Activated CD4-positive, alpha-beta memory T cell treated with anti-CD3 and anti-CD28 coated beads for 36 hours (primary cell): ENCODE measurements at regions of chr3 and their contacts with region 1.

Region 1: DNA sequence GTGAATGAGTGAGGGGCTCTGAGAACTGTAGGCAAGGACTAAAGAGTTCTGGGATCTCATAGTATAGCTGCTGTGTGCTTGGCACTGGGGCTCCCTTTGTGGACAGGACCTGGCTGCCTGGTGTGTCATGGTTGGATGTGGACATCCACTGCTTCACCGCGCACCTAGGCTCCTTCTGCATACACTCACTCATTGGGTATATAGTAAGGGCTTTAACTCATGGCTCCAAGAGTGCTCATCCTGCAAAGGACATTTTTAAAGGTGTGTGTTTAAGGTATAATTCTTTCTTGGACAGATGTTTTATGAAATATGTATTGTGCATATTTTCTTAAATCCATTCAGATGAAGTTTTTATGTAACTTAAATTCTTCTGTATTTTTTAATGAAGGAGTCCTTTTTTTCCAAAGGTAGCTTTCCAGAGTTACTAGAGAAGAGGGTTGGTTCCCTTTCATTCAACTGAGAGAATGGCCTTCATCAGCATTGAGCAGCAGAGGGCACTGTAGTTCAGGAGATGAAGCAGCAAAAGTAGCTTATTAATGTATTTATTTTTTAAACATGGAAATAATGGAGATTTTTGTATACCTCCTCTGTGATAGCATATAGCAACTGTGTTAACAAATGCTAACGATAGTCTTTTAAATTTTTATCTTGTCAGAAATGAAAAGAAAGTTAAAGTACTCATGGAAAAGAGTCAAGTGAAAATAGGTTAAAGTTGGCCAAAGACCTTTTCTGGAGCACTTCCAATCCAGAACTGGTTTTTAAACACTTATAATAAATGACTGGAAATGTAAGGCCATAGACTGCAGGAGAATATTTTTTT is 25.2 kb downstream of the OXNAD1 start:
- DNase-seq: peak; percentile 70
- H3K4me3 Mint-ChIP-seq: peak overlapping the region; percentile 45
- H3K27ac Mint-ChIP-seq: peak overlapping the region; percentile 85
- H3K4me1 Mint-ChIP-seq: peaks cover 89% of the 10 kb centered on the region
- H3K27me3 Mint-ChIP-seq: no peaks in the 10 kb centered on the region

Region 2: GRCh38 chr3:15815696-15816095 is 474.5 kb before region 1 on chr3:
- CTCF ChIA-PET with region 1: no interaction called
- POLR2A ChIA-PET with region 1: no interaction called
- intact Hi-C with region 1: no loop called
- DNase-seq: no peak
- H3K4me3 Mint-ChIP-seq: no peak overlapping the region
- H3K27ac Mint-ChIP-seq: no peak overlapping the region
- H3K4me1 Mint-ChIP-seq: peaks cover 48% of the 10 kb centered on the region
- H3K27me3 Mint-ChIP-seq: no peaks in the 10 kb centered on the region

Region 3: GRCh38 chr3:16264708-16265454 is 25.3 kb before region 1 on chr3 and contains the starts of genes DPH3 and OXNAD1:
- CTCF ChIA-PET with region 1: interaction called, 33 read pairs
- POLR2A ChIA-PET with region 1: interaction called, 15 read pairs
- intact Hi-C with region 1: loop called (anchors 1 kb)
- DNase-seq: peak; percentile 99
- H3K4me3 Mint-ChIP-seq: peak within 1 kb of the TSS; percentile 93
- H3K27ac Mint-ChIP-seq: peak within 1 kb of the TSS; percentile 94
- H3K4me1 Mint-ChIP-seq: peaks cover 36% of the 10 kb centered on the region
- H3K27me3 Mint-ChIP-seq: no peaks in the 10 kb centered on the region
- total RNA-seq, gene DPH3: 23.4 TPM
- total RNA-seq, gene OXNAD1: 23.5 to 24.0 TPM

Region 4: GRCh38 chr3:16309558-16309957 is 19.3 kb after region 1 on chr3:
- CTCF ChIA-PET with region 1: interaction called, 48 read pairs
- POLR2A ChIA-PET with region 1: interaction called, 5 read pairs
- intact Hi-C with region 1: loop called (anchors 1 kb)
- DNase-seq: peak; percentile 76
- H3K4me3 Mint-ChIP-seq: peak overlapping the region; percentile 33
- H3K27ac Mint-ChIP-seq: peak overlapping the region; percentile 84
- H3K4me1 Mint-ChIP-seq: peaks cover 91% of the 10 kb centered on the region
- H3K27me3 Mint-ChIP-seq: no peaks in the 10 kb centered on the region

Region 5: GRCh38 chr3:16378920-16379319 is 88.7 kb after region 1 on chr3:
- CTCF ChIA-PET with region 1: interaction called, 3 read pairs
- POLR2A ChIA-PET with region 1: no interaction called
- intact Hi-C with region 1: loop called (anchors 2 kb)
- DNase-seq: peak; percentile 38
- H3K4me3 Mint-ChIP-seq: no peak overlapping the region
- H3K27ac Mint-ChIP-seq: peak overlapping the region; percentile 70
- H3K4me1 Mint-ChIP-seq: peaks cover 82% of the 10 kb centered on the region
- H3K27me3 Mint-ChIP-seq: no peaks in the 10 kb centered on the region

Region 6: DNA sequence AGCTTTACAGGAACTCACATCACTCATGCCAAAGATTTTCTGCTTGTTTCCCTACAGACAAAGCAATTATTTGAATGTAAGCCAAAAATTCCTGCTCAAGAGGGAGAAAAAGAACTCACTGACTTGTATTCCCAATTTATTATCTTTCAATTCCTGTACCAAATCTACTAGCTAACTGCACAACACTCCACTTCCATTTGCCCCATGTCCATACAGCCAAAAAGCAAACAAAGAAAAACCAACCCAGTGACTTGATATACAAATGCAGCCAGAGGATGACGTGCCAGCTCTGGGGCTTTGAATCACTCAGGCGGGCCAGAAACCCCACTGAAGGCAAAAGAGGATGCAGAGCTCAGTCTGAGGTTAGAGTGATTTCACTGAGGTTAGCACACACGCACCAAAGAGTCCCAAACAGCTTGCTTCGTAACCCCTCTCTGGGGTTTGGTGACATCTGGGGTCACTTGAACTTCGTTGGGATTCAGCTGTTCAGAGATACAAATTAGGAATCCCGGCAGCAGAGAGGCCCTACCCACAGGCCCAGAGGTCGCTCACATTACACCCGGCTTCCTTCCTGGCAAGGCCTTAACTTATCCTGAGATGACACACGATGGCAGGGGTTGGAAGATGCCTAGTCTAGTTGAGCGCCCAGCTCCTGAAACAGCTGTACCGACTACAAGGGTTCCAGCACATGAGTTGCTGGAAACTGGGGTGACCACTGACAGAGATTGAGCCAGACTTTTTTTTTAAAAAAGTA is 221.6 kb after region 1 on chr3:
- CTCF ChIA-PET with region 1: interaction called, 23 read pairs
- POLR2A ChIA-PET with region 1: interaction called, 8 read pairs
- intact Hi-C with region 1: loop called (anchors 1 kb)
- DNase-seq: peak; percentile 92
- H3K4me3 Mint-ChIP-seq: peak overlapping the region; percentile 94
- H3K27ac Mint-ChIP-seq: peak overlapping the region; percentile 96
- H3K4me1 Mint-ChIP-seq: peaks cover 74% of the 10 kb centered on the region
- H3K27me3 Mint-ChIP-seq: no peaks in the 10 kb centered on the region

Region 7: GRCh38 chr3:16550676-16551341 is 260.6 kb after region 1 on chr3:
- CTCF ChIA-PET with region 1: interaction called, 33 read pairs
- POLR2A ChIA-PET with region 1: interaction called, 3 read pairs
- intact Hi-C with region 1: loop called (anchors 1 kb)
- DNase-seq: peak; percentile 82
- H3K4me3 Mint-ChIP-seq: peak overlapping the region; percentile 3
- H3K27ac Mint-ChIP-seq: peak overlapping the region; percentile 59
- H3K4me1 Mint-ChIP-seq: peaks cover 3% of the 10 kb centered on the region
- H3K27me3 Mint-ChIP-seq: peaks cover 5% of the 10 kb centered on the region

Region 8: GRCh38 chr3:17039580-17039979 is 749.4 kb after region 1 on chr3:
- CTCF ChIA-PET with region 1: no interaction called
- POLR2A ChIA-PET with region 1: no interaction called
- intact Hi-C with region 1: loop called (anchors 5 kb)
- DNase-seq: no peak
- H3K4me3 Mint-ChIP-seq: no peak overlapping the region
- H3K27ac Mint-ChIP-seq: peak overlapping the region; percentile 57
- H3K4me1 Mint-ChIP-seq: peaks cover 32% of the 10 kb centered on the region
- H3K27me3 Mint-ChIP-seq: no peaks in the 10 kb centered on the region